Activated CD4-positive, alpha-beta T cell treated with anti-CD3 and anti-CD28 coated beads, Interleukin-2, amount 10 ng/mL, durations not matched to agents 24 days and 14 days (primary cell): ENCODE measurements at regions of chr9 and their contacts with region 1.

Region 1: GRCh38 chr9:20356403-20357035 is 265.8 kb downstream of the MLLT3 start:
- DNase-seq: peak; percentile 85
- H3K4me3 Mint-ChIP-seq: no peak overlapping the region
- H3K27ac Mint-ChIP-seq: peak overlapping the region; percentile 51
- H3K4me1 Mint-ChIP-seq: peaks cover 76% of the 10 kb centered on the region
- H3K27me3 Mint-ChIP-seq: no peaks in the 10 kb centered on the region

Region 2: GRCh38 chr9:19976226-19976625 is 380.3 kb before region 1 on chr9:
- intact Hi-C with region 1: loop called (anchors 2 kb)
- DNase-seq: peak; percentile 81
- H3K4me3 Mint-ChIP-seq: peak overlapping the region; percentile 1
- H3K27ac Mint-ChIP-seq: peak overlapping the region; percentile 94
- H3K4me1 Mint-ChIP-seq: peaks cover 33% of the 10 kb centered on the region
- H3K27me3 Mint-ChIP-seq: no peaks in the 10 kb centered on the region

Region 3: GRCh38 chr9:20209391-20210340 is 146.9 kb before region 1 on chr9:
- intact Hi-C with region 1: loop called (anchors 1 kb)
- DNase-seq: peak; percentile 89
- H3K4me3 Mint-ChIP-seq: peak overlapping the region; percentile 57
- H3K27ac Mint-ChIP-seq: peak overlapping the region; percentile 95
- H3K4me1 Mint-ChIP-seq: peaks cover 36% of the 10 kb centered on the region
- H3K27me3 Mint-ChIP-seq: no peaks in the 10 kb centered on the region

Region 4: DNA sequence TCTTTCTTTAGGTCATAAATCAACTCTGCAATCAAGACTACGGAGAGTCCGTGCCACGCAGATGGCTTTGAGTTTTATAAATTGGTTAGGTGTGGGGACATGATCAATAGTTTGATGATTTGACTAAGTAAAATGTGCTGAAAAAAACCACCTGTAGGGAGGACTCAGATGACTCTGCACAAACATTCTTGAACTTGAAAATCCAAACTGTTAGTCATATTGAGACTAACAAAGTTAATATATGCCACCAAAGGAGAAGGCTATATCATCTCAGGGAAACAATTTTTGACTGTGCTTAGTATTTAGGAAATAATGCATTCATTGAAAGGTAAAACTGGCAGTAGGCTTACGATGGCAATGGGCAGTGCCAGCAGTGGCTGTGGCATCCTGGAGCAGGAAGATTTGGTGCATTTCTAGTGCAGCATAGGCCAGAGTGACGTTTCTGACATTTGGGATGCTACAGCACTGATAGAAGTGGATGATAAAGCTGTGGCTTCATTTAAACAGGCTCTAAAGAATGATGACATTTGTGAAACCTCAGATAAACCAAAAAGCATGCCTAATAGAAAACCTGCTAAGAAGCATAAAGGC is 25.3 kb before region 1 on chr9:
- intact Hi-C with region 1: loop called (anchors 1 kb)
- DNase-seq: no peak
- H3K4me3 Mint-ChIP-seq: peak overlapping the region; percentile 21
- H3K27ac Mint-ChIP-seq: peak overlapping the region; percentile 40
- H3K4me1 Mint-ChIP-seq: peaks cover 23% of the 10 kb centered on the region
- H3K27me3 Mint-ChIP-seq: no peaks in the 10 kb centered on the region

Region 5: GRCh38 chr9:20552874-20553575 is 196.5 kb after region 1 on chr9:
- intact Hi-C with region 1: loop called (anchors 1 kb)
- DNase-seq: peak; percentile 69
- H3K4me3 Mint-ChIP-seq: peak overlapping the region; percentile 57
- H3K27ac Mint-ChIP-seq: peak overlapping the region; percentile 82
- H3K4me1 Mint-ChIP-seq: peaks cover 67% of the 10 kb centered on the region
- H3K27me3 Mint-ChIP-seq: no peaks in the 10 kb centered on the region

Region 6: GRCh38 chr9:20884985-20885593 is 528.6 kb after region 1 on chr9:
- intact Hi-C with region 1: loop called (anchors 10 kb)
- DNase-seq: peak; percentile 85
- H3K4me3 Mint-ChIP-seq: no peak overlapping the region
- H3K27ac Mint-ChIP-seq: no peak overlapping the region
- H3K4me1 Mint-ChIP-seq: peaks cover 1% of the 10 kb centered on the region
- H3K27me3 Mint-ChIP-seq: no peaks in the 10 kb centered on the region

Region 7: DNA sequence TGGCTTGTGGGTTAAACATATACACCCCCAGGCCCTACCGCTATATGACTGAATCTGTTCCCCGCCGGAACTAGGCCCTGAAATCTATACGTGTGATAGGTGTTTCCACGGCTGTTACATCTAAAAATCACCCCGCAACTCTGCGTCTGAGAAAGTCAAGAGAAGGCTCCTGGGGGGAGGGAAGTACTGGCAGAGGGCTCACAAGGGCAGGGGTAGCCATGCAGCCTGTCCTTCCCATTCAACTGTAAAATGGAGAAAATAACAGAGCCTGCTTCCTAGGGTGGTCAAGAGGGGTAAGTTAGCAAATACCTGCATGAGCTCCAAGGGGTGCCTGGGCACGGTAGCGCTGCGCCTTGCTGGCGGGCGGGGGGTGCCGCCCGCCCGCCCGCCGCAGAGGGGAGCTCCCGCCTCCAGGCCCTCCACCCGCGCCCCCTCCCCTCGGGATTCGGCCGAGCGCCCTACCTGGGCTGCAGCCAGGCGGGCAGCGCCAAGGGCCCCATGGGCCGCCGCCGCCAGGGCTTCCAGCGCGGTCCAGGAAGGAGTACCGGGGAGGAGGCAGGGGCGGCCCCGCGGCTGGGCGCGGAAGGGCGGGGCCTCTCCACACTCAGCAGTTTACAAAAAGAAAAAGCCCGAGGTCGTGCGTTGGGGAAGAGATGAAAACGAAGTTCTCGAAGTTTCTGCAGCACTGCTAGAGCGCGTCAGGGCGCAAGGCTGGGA is 674.7 kb after region 1 on chr9 and contains the start of gene HACD4:
- intact Hi-C with region 1: loop called (anchors 5 kb)
- DNase-seq: peak; percentile 92
- H3K4me3 Mint-ChIP-seq: peak within 1 kb of the TSS; percentile 69
- H3K27ac Mint-ChIP-seq: peak within 1 kb of the TSS; percentile 78
- H3K4me1 Mint-ChIP-seq: peaks cover 11% of the 10 kb centered on the region
- H3K27me3 Mint-ChIP-seq: peaks cover 3% of the 10 kb centered on the region
- total RNA-seq, gene HACD4: 2.8 and 3.0 TPM in 2 replicates